Caco-2 (cell line): ENCODE measurements at regions of chr7 and their contacts with region 1.

Region 1: DNA sequence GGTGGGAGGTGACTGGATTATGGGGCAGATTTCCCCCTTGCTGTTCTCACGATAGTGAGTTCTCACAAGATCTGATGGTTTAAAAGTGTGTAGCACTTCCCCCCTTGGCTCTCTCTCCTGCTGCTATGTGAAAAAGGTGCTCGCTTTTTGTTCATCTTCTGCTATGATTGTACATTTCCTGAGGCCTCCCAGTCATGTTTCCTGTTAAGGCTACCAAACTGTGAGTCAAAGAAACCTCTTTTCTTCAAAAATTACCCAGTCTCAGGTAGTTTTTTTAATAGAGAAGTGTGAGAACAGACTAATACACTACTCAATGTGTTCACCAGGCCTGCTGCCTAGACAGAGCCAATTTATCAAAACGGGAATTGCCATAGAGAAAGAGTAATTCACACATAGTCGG is 49.7 kb downstream of the SDHAF3 start:
- DNase-seq: no peak
- H3K4me3 ChIP-seq: no peak overlapping the region
- H3K4me3 Mint-ChIP-seq: no peak overlapping the region
- H3K27ac Mint-ChIP-seq: no peak overlapping the region
- H3K4me1 ChIP-seq: no peaks in the 10 kb centered on the region
- H3K4me1 Mint-ChIP-seq: no peaks in the 10 kb centered on the region
- H3K27me3 ChIP-seq: no peaks in the 10 kb centered on the region
- H3K27me3 Mint-ChIP-seq: no peaks in the 10 kb centered on the region
- CTCF ChIP-seq: no peak

Region 2: DNA sequence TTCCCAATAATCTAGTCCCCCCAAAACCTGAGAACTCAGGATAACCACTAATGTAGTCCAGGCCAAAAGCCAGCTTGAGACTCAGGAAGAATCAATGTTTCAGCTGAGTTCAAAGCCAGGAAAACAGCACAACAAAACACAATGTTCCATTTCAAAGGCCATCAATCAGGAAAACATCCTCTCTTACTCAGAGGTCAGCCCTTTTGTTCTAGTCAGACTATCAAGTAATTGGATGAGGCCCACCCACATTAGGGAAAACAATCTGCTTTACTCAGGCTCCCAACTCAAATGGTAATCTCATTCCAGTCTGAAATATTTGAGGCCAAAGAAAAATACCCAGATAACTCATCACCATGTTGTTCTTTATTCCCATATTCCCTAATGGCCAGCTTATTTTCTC is 102.6 kb after region 1 on chr7:
- CTCF ChIA-PET with region 1: no interaction called
- POLR2A ChIA-PET with region 1: interaction called, 15 read pairs
- intact Hi-C with region 1: no loop called
- DNase-seq: no peak
- H3K4me3 ChIP-seq: no peak overlapping the region
- H3K4me3 Mint-ChIP-seq: no peak overlapping the region
- H3K27ac Mint-ChIP-seq: no peak overlapping the region
- H3K4me1 ChIP-seq: no peaks in the 10 kb centered on the region
- H3K4me1 Mint-ChIP-seq: no peaks in the 10 kb centered on the region
- H3K27me3 ChIP-seq: no peaks in the 10 kb centered on the region
- H3K27me3 Mint-ChIP-seq: no peaks in the 10 kb centered on the region
- CTCF ChIP-seq: no peak

Region 3: DNA sequence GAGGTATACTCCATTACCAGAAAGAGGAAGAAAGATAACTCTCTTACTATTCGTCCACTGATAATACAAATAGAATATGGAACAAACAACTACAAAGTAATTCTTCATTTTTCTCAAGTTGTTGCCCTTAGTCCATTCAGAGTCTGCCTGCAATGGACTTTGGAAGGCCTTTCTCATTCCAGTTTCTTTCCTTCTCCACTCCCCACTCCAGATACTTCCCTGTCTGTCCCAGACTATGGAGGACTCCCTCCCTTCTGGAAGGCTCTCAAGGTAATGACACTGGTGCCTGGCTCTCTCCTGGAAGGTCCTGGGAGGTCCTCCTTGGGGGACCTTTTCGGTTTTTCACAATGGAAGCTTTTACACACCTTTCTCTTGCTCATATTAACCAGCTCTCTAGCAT is 118.2 kb after region 1 on chr7:
- CTCF ChIA-PET with region 1: no interaction called
- POLR2A ChIA-PET with region 1: no interaction called
- intact Hi-C with region 1: no loop called
- DNase-seq: no peak
- H3K4me3 ChIP-seq: no peak overlapping the region
- H3K4me3 Mint-ChIP-seq: no peak overlapping the region
- H3K27ac Mint-ChIP-seq: no peak overlapping the region
- H3K4me1 ChIP-seq: no peaks in the 10 kb centered on the region
- H3K4me1 Mint-ChIP-seq: no peaks in the 10 kb centered on the region
- H3K27me3 ChIP-seq: no peaks in the 10 kb centered on the region
- H3K27me3 Mint-ChIP-seq: peaks cover 8% of the 10 kb centered on the region
- CTCF ChIP-seq: no peak